Activated B cell treated with CpG ODN at 0.5 μM for 24 hours (primary cell): ENCODE measurements at regions of chr6 and their contacts with region 1.

Region 1: DNA sequence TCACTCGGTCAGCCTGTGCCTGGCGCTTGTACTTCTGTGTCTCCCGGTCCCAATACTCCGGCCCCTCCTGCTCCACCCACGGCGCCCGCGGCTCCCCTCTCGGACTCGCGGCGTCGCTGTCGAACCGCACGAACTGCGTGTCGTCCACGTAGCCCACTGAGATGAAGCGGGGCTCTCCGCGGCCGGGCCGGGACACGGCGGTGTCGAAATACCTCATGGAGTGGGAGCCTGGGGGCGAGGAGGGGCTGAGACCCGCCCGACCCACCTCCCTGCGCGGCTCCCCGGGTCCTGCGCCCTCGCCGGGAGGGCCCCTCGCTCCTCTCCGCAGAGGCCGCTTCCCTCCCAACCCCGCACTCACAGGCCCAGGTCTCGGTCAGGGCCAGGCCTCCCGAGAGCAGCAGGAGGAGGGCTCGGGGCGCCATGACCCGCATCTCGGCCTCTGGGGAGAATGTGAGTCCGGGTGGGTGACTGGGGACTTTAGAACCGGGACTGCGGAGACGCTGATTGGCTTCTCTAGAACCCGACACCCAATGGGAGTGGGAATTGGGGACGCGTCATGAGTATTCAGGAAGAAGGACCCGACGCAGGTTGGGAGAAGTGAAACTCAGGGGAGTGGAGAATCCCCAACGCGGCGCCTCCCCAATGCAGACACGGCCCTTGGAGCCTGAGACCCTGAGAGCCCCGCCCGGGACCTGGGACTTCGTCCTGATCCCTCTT is at the start of gene HLA-C:
- DNase-seq: peak; percentile 77
- ATAC-seq: peak; percentile 87
- H3K4me3 Mint-ChIP-seq: peak within 1 kb of the TSS; percentile 90
- H3K27ac Mint-ChIP-seq: peak within 1 kb of the TSS; percentile 99
- H3K4me1 Mint-ChIP-seq: peaks cover 65% of the 10 kb centered on the region
- H3K27me3 Mint-ChIP-seq: no peaks in the 10 kb centered on the region
- CTCF ChIP-seq: no peak
- total RNA-seq, gene HLA-C: 762 and 793 TPM in 2 replicates

Region 2: DNA sequence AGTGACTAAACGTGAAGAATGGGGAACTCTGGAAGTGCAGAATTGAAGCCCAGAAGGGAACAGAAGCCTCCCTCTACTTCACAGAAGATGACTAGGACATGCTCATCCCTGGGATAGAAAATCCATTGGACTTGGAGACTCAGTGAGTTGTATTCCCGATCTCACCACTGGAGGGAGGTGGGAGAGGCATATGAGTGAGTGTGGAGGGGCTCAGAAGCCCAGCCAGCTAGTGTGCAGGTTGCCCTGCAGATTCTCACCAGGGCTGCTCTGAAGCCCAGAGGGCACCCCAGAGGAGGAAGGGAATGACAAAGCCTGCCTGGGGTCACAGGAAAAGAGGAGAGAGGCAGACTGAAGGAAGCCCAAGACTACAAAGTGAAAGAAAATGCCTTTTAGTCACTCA is 824.6 kb before region 1 on chr6:
- CTCF ChIA-PET with region 1: no interaction called
- POLR2A ChIA-PET with region 1: no interaction called
- intact Hi-C with region 1: loop called (anchors 5 kb)
- DNase-seq: no peak
- ATAC-seq: no peak
- H3K4me3 Mint-ChIP-seq: no peak overlapping the region
- H3K27ac Mint-ChIP-seq: no peak overlapping the region
- H3K4me1 Mint-ChIP-seq: peaks cover 18% of the 10 kb centered on the region
- H3K27me3 Mint-ChIP-seq: peaks cover 73% of the 10 kb centered on the region
- CTCF ChIP-seq: no peak

Region 3: GRCh38 chr6:31007694-31008093 is 264.1 kb before region 1 on chr6:
- CTCF ChIA-PET with region 1: no interaction called
- POLR2A ChIA-PET with region 1: no interaction called
- intact Hi-C with region 1: no loop called
- DNase-seq: no peak
- ATAC-seq: no peak
- H3K4me3 Mint-ChIP-seq: no peak overlapping the region
- H3K27ac Mint-ChIP-seq: no peak overlapping the region
- H3K4me1 Mint-ChIP-seq: peaks cover 3% of the 10 kb centered on the region
- H3K27me3 Mint-ChIP-seq: peaks cover 25% of the 10 kb centered on the region
- CTCF ChIP-seq: no peak

Region 4: GRCh38 chr6:31139599-31139998 is 132.2 kb before region 1 on chr6:
- CTCF ChIA-PET with region 1: no interaction called
- POLR2A ChIA-PET with region 1: no interaction called
- intact Hi-C with region 1: loop called (anchors 1 kb)
- DNase-seq: no peak
- ATAC-seq: no peak
- H3K4me3 Mint-ChIP-seq: no peak overlapping the region
- H3K27ac Mint-ChIP-seq: no peak overlapping the region
- H3K4me1 Mint-ChIP-seq: peaks cover 7% of the 10 kb centered on the region
- H3K27me3 Mint-ChIP-seq: no peaks in the 10 kb centered on the region
- CTCF ChIP-seq: no peak

Region 5: GRCh38 chr6:31203345-31203979 is 68.3 kb before region 1 on chr6:
- CTCF ChIA-PET with region 1: no interaction called
- POLR2A ChIA-PET with region 1: interaction called, 25 read pairs
- intact Hi-C with region 1: loop called (anchors 1 kb)
- DNase-seq: no peak
- ATAC-seq: peak; percentile 64
- H3K4me3 Mint-ChIP-seq: peak overlapping the region; percentile 89
- H3K27ac Mint-ChIP-seq: peak overlapping the region; percentile 94
- H3K4me1 Mint-ChIP-seq: peaks cover 55% of the 10 kb centered on the region
- H3K27me3 Mint-ChIP-seq: no peaks in the 10 kb centered on the region
- CTCF ChIP-seq: no peak

Region 6: GRCh38 chr6:31293343-31293742 is 21.5 kb after region 1 on chr6:
- CTCF ChIA-PET with region 1: no interaction called
- POLR2A ChIA-PET with region 1: interaction called, 4 read pairs
- intact Hi-C with region 1: loop called (anchors 2 kb)
- DNase-seq: no peak
- ATAC-seq: no peak
- H3K4me3 Mint-ChIP-seq: no peak overlapping the region
- H3K27ac Mint-ChIP-seq: no peak overlapping the region
- H3K4me1 Mint-ChIP-seq: no peaks in the 10 kb centered on the region
- H3K27me3 Mint-ChIP-seq: peaks cover 14% of the 10 kb centered on the region
- CTCF ChIP-seq: no peak

Region 7: GRCh38 chr6:31308050-31308844 is 36.4 kb after region 1 on chr6:
- CTCF ChIA-PET with region 1: no interaction called
- POLR2A ChIA-PET with region 1: interaction called, 4 read pairs
- intact Hi-C with region 1: loop called (anchors 1 kb)
- DNase-seq: peak; percentile 68
- ATAC-seq: peak; percentile 98
- H3K4me3 Mint-ChIP-seq: peak overlapping the region; percentile 88
- H3K27ac Mint-ChIP-seq: peak overlapping the region; percentile 59
- H3K4me1 Mint-ChIP-seq: peaks cover 2% of the 10 kb centered on the region
- H3K27me3 Mint-ChIP-seq: peaks cover 12% of the 10 kb centered on the region
- CTCF ChIP-seq: no peak

Region 8: DNA sequence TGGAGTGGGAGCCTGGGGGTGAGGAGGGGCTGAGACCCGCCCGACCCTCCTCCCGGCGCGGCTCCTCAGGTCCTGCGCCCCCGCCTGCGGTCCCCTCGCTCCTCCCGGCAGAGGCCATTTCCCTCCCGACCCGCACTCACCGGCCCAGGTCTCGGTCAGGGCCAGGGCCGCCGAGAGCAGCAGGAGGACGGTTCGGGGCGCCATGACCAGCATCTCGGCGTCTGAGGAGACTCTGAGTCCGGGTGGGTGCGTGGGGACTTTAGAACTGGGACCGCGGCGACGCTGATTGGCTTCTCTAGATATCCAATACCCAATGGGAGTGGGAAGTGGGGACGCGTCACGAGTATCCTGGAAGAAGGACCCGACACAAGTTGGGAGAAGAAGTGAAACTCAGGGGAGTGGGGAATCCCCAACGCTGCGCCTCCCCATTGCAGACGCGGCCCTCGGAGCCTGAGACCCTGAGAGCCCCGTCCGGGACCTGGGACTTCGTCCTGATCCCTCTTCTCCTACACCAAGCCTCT is 85.2 kb after region 1 on chr6 and contains the start of gene HLA-B:
- CTCF ChIA-PET with region 1: no interaction called
- POLR2A ChIA-PET with region 1: interaction called, 114 read pairs
- intact Hi-C with region 1: loop called (anchors 1 kb)
- DNase-seq: peak; percentile 64
- ATAC-seq: peak; percentile 85
- H3K4me3 Mint-ChIP-seq: peak within 1 kb of the TSS; percentile 95
- H3K27ac Mint-ChIP-seq: peak within 1 kb of the TSS; percentile 100
- H3K4me1 Mint-ChIP-seq: peaks cover 54% of the 10 kb centered on the region
- H3K27me3 Mint-ChIP-seq: no peaks in the 10 kb centered on the region
- CTCF ChIP-seq: no peak
- total RNA-seq, gene HLA-B: 3,667 and 3,668 TPM in 2 replicates